CD8-positive, alpha-beta memory T cell (primary cell): ENCODE measurements at regions of chr17 and their contacts with region 1.

Region 1: DNA sequence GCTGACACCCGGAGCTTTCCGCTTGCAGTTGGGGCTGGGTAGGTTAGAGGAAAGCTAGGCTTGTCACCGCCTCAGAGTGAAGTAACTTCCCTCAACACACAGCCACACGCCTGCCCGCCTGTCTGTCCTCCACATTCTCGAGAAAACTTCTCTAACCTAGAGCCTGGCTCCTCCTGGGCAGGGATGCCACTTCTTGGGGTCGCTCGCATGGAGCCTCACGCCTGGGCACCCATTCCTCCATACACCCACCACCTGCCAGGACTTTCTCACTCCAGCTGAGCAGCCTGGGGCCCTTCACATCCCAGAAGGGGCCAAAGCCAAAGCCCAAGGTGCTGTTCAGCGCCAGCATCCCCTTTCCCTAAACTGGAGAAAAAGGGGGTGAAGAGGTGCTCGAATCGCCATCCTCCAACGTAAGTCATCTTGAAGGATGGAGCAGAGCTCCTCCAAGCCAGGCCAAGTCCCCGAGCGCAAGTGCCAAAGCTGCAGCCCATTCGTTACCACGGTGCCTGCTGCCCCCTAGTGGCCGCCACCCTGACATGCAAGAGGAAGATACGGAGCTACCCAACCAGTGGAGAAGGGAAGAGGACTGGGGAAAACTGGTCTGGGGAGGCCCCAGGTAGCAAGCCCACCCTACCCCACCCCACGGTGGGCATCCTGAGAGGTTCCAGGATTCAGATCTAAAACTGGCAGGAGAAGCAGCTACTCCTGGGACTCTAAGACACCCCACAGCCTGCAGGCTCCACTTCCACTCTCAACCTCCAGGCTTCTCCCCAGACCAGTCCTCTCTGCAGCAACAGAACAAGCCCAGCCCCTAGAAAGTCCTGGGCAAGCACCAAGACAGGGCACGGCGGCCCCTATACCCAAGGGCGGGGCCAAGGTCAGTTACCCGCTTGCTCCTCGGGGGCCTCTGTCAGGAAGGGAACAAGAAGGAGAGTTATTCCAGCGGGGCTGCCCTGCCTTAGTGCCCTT is 63.1 kb downstream of the MYO18A start:
- DNase-seq: peak; percentile 60 to 86 (median 73)
- H3K4me3 ChIP-seq: no peak overlapping the region
- H3K4me3 Mint-ChIP-seq: no peak overlapping the region
- H3K27ac ChIP-seq: no peak overlapping the region
- H3K27ac Mint-ChIP-seq: peak overlapping the region in 4 of 8 donors; percentile 32 to 89 (median 68)
- H3K4me1 ChIP-seq: no peaks in the 10 kb centered on the region
- H3K4me1 Mint-ChIP-seq: peaks cover 4 to 8% (median 7%) of the 10 kb centered on the region in 3 donors
- H3K27me3 ChIP-seq: no peaks in the 10 kb centered on the region
- H3K27me3 Mint-ChIP-seq: no peaks in the 10 kb centered on the region

Region 2: DNA sequence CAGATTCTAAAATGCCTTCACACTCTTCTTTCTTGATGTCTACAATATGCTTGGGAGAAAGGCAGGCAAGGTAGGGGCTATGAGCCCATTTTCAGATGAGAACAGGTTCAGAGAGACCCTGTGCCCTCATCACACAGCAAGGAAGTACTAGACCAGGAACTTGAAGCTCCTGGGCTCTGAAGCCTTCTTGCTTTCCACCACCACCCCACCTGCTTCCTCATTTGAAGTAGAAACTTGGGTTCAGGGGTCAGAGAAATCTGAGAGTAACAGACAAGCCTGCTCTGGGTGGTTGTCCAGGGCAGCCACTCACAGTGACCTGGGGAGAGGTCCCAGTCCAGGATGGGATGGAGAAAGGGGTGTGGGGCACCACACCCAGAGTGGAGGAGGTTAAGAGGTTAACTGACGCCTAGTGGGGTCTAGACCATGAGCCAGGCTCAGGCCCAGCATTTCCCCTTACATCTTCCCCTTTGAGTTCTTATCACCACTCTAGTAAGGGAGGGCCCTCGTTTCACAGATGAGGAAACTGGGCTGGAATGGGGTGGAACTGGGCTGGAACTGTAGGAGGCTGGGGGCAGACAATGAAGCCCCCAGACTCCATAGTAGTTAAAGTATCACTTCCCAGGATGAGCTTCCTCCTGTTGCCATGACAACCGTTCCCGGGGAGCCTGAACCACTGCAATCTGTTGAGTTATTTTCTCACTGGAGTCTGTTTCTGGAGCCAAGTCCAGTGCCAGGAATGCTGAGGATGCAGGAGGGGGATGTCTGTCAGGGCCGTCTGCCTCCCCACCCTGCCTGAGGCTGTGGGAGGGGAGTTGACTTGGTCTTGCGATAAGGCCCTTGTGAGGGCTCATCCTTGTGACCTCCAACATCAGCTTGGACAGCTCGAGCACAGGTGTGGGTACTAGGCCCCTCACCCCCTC is 149.6 kb before region 1 on chr17:
- CTCF ChIA-PET with region 1: interaction called, 136 read pairs
- POLR2A ChIA-PET with region 1: interaction called, 12 read pairs
- DNase-seq: peak in 1 of 5 donors; percentile 18
- H3K4me3 ChIP-seq: no peak overlapping the region
- H3K4me3 Mint-ChIP-seq: no peak overlapping the region
- H3K27ac ChIP-seq: no peak overlapping the region
- H3K27ac Mint-ChIP-seq: no peak overlapping the region
- H3K4me1 ChIP-seq: no peaks in the 10 kb centered on the region
- H3K4me1 Mint-ChIP-seq: peaks cover 0 to 3% (median 0%) of the 10 kb centered on the region in 3 donors
- H3K27me3 ChIP-seq: no peaks in the 10 kb centered on the region
- H3K27me3 Mint-ChIP-seq: peaks cover 8 to 26% of the 10 kb centered on the region in 2 donors

Region 3: DNA sequence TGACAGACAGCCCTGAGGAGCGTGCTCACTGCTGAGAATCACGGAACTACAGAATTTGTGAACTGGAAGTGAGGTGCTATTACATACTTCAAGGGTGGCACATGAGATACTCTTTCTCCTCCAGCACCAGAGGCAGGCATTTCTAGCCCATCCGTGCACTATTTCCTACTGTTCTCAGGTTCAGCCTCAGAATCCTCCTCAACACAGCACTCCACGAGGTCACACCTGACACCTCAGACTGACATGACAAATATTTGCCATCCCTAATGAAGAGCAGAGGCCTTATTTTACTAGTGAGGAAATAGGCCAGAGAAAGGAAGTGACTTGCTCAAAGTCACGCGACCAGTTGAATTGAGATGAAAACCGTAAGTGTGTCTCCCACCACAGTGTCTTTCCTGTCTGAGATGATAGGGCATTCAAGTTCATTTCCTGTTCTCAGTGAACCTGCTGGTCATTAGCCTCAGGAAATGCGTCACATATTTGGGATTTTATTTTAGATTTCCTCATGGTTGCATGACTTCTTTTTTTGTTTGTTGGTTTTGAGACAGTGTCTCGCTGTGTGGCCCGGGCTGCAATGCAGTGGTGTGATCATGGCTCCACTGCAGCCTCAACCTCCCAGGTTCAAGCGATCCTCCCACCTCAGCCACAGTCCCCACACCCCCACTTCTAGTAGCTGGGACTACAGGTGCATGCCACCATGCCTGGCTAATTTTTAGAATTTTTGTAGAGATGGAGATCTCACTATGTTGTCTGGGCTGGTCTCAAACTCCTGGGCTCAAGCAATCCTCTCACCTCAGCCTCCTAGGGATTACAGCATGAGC is 134.7 kb before region 1 on chr17:
- CTCF ChIA-PET with region 1: interaction called, 10 read pairs
- POLR2A ChIA-PET with region 1: no interaction called
- DNase-seq: peak; percentile 53 to 88 (median 77)
- H3K4me3 ChIP-seq: no peak overlapping the region
- H3K4me3 Mint-ChIP-seq: peak overlapping the region; percentile 3 to 74 (median 51)
- H3K27ac ChIP-seq: peak overlapping the region; percentile 64
- H3K27ac Mint-ChIP-seq: peak overlapping the region; percentile 90 to 99 (median 98)
- H3K4me1 ChIP-seq: peaks cover 24% of the 10 kb centered on the region
- H3K4me1 Mint-ChIP-seq: peaks cover 19 to 23% (median 21%) of the 10 kb centered on the region in 3 donors
- H3K27me3 ChIP-seq: no peaks in the 10 kb centered on the region
- H3K27me3 Mint-ChIP-seq: peaks cover 0 to 2% of the 10 kb centered on the region in 2 donors

Region 4: GRCh38 chr17:29133146-29133713 is 16.1 kb after region 1 on chr17:
- CTCF ChIA-PET with region 1: interaction called, 60 read pairs
- POLR2A ChIA-PET with region 1: no interaction called
- DNase-seq: no peak
- H3K4me3 ChIP-seq: no peak overlapping the region
- H3K4me3 Mint-ChIP-seq: no peak overlapping the region
- H3K27ac ChIP-seq: no peak overlapping the region
- H3K27ac Mint-ChIP-seq: peak overlapping the region in 3 of 8 donors; percentile 27 to 68 (median 66)
- H3K4me1 ChIP-seq: peaks cover 30% of the 10 kb centered on the region
- H3K4me1 Mint-ChIP-seq: peaks cover 39 to 71% (median 50%) of the 10 kb centered on the region in 3 donors
- H3K27me3 ChIP-seq: no peaks in the 10 kb centered on the region
- H3K27me3 Mint-ChIP-seq: no peaks in the 10 kb centered on the region

Region 5: DNA sequence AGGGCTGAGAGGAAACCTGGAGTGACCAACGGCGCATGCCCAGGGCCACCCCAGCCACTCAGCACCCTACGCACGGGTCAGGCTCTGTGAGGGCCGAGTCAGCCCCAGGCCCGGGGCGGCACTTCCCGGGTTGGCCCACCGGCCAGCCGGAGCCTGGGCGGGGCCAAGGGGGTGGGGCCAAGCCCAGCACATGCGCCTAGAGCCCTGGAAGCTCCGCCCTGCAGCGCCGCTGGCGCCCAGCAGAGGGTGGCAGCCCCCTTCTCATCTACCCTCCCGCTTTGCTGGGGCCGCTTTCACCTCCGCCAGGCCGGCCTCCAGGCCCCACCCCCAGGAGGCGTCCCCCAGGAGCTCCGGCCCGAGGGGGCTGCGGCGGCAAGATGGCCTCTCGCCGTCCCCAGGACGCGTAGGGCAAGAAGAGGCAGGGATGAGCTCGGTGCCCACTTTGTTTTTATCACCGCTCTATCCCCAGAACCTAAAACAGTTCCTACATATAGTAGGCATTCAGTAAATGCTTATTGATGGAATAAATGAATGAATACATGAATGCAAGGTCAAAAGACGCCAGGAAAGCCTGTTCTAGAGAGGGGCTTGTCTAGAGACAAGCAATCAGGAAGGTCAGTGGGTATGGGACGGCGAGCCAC is 31.8 kb after region 1 on chr17:
- CTCF ChIA-PET with region 1: interaction called, 16 read pairs
- POLR2A ChIA-PET with region 1: no interaction called
- DNase-seq: peak; percentile 89 to 94 (median 92)
- H3K4me3 ChIP-seq: peak overlapping the region; percentile 68
- H3K4me3 Mint-ChIP-seq: peak overlapping the region; percentile 76 to 90 (median 80)
- H3K27ac ChIP-seq: peak overlapping the region; percentile 48
- H3K27ac Mint-ChIP-seq: peak overlapping the region; percentile 84 to 96 (median 92)
- H3K4me1 ChIP-seq: peaks cover 26% of the 10 kb centered on the region
- H3K4me1 Mint-ChIP-seq: peaks cover 32 to 56% (median 34%) of the 10 kb centered on the region in 3 donors
- H3K27me3 ChIP-seq: no peaks in the 10 kb centered on the region
- H3K27me3 Mint-ChIP-seq: no peaks in the 10 kb centered on the region

Region 6: DNA sequence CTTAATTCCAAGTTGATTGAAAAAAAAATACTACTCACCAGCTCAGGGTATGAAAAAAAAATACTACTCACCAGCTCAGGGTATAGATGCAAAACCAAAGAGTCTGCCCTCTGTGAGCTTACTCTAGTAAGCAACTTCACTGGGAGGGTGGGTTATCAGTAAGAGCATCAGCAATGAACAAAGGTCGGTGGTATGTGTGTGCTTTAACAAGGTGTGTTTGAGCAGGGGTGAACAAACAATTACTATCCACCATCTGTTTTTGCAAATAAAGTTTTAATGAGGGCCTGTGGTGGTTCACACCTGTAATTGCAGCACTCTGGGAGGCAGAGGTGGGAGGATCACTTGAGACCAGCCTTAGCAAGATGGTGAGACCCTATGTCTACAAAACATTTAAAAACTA is 156.8 kb after region 1 on chr17:
- CTCF ChIA-PET with region 1: no interaction called
- POLR2A ChIA-PET with region 1: no interaction called
- DNase-seq: no peak
- H3K4me3 ChIP-seq: no peak overlapping the region
- H3K4me3 Mint-ChIP-seq: peak overlapping the region in 2 of 7 donors; percentile 20 to 52
- H3K27ac ChIP-seq: no peak overlapping the region
- H3K27ac Mint-ChIP-seq: peak overlapping the region in 7 of 8 donors; percentile 31 to 90 (median 66)
- H3K4me1 ChIP-seq: peaks cover 44% of the 10 kb centered on the region
- H3K4me1 Mint-ChIP-seq: peaks cover 52 to 85% (median 73%) of the 10 kb centered on the region in 3 donors
- H3K27me3 ChIP-seq: no peaks in the 10 kb centered on the region
- H3K27me3 Mint-ChIP-seq: no peaks in the 10 kb centered on the region